Caco-2 (cell line): ENCODE measurements at regions of chr16 and their contacts with region 1.

Region 1: GRCh38 chr16:75110637-75111513 is 5.7 kb downstream of the LDHD start:
- DNase-seq: peak; percentile 88 to 89
- H3K4me3 ChIP-seq: no peak overlapping the region
- H3K4me3 Mint-ChIP-seq: peak overlapping the region; percentile 32
- H3K27ac Mint-ChIP-seq: peak overlapping the region; percentile 84
- H3K4me1 ChIP-seq: peaks cover 18% of the 10 kb centered on the region
- H3K4me1 Mint-ChIP-seq: peaks cover 37% of the 10 kb centered on the region
- H3K27me3 ChIP-seq: no peaks in the 10 kb centered on the region
- H3K27me3 Mint-ChIP-seq: no peaks in the 10 kb centered on the region
- CTCF ChIP-seq: peak; percentile 85 to 93

Region 2: GRCh38 chr16:74862741-74863244 is 248.1 kb before region 1 on chr16:
- CTCF ChIA-PET with region 1: interaction called, 16 read pairs
- POLR2A ChIA-PET with region 1: no interaction called
- intact Hi-C with region 1: no loop called
- DNase-seq: peak; percentile 49 to 78
- H3K4me3 ChIP-seq: no peak overlapping the region
- H3K4me3 Mint-ChIP-seq: no peak overlapping the region
- H3K27ac Mint-ChIP-seq: no peak overlapping the region
- H3K4me1 ChIP-seq: no peaks in the 10 kb centered on the region
- H3K4me1 Mint-ChIP-seq: peaks cover 5% of the 10 kb centered on the region
- H3K27me3 ChIP-seq: no peaks in the 10 kb centered on the region
- H3K27me3 Mint-ChIP-seq: no peaks in the 10 kb centered on the region
- CTCF ChIP-seq: peak; percentile 88 to 97

Region 3: GRCh38 chr16:74975591-74975990 is 135.3 kb before region 1 on chr16:
- CTCF ChIA-PET with region 1: no interaction called
- POLR2A ChIA-PET with region 1: no interaction called
- intact Hi-C with region 1: no loop called
- DNase-seq: no peak
- H3K4me3 ChIP-seq: no peak overlapping the region
- H3K4me3 Mint-ChIP-seq: no peak overlapping the region
- H3K27ac Mint-ChIP-seq: no peak overlapping the region
- H3K4me1 ChIP-seq: no peaks in the 10 kb centered on the region
- H3K4me1 Mint-ChIP-seq: no peaks in the 10 kb centered on the region
- H3K27me3 ChIP-seq: no peaks in the 10 kb centered on the region
- H3K27me3 Mint-ChIP-seq: no peaks in the 10 kb centered on the region
- CTCF ChIP-seq: no peak

Region 4: GRCh38 chr16:74991593-74992403 is 119.1 kb before region 1 on chr16:
- CTCF ChIA-PET with region 1: interaction called, 112 read pairs
- POLR2A ChIA-PET with region 1: interaction called, 3 read pairs
- intact Hi-C with region 1: no loop called
- DNase-seq: peak; percentile 85 to 88
- H3K4me3 ChIP-seq: 0 out of 2 replicates have a peak overlapping the region, but pooled peaks have one; percentile 10
- H3K4me3 Mint-ChIP-seq: peak overlapping the region; percentile 64
- H3K27ac Mint-ChIP-seq: peak overlapping the region; percentile 50
- H3K4me1 ChIP-seq: peaks cover 67% of the 10 kb centered on the region
- H3K4me1 Mint-ChIP-seq: peaks cover 40% of the 10 kb centered on the region
- H3K27me3 ChIP-seq: no peaks in the 10 kb centered on the region
- H3K27me3 Mint-ChIP-seq: no peaks in the 10 kb centered on the region
- CTCF ChIP-seq: no peak

Region 5: GRCh38 chr16:75070012-75070941 is 40.6 kb before region 1 on chr16:
- CTCF ChIA-PET with region 1: interaction called, 11 read pairs
- POLR2A ChIA-PET with region 1: no interaction called
- intact Hi-C with region 1: loop called (anchors 2 kb)
- DNase-seq: peak; percentile 86 to 93
- H3K4me3 ChIP-seq: no peak overlapping the region
- H3K4me3 Mint-ChIP-seq: peak overlapping the region; percentile 63
- H3K27ac Mint-ChIP-seq: peak overlapping the region; percentile 91
- H3K4me1 ChIP-seq: peaks cover 66% of the 10 kb centered on the region
- H3K4me1 Mint-ChIP-seq: peaks cover 55% of the 10 kb centered on the region
- H3K27me3 ChIP-seq: no peaks in the 10 kb centered on the region
- H3K27me3 Mint-ChIP-seq: no peaks in the 10 kb centered on the region
- CTCF ChIP-seq: no peak

Region 6: GRCh38 chr16:75130150-75130771 is 19.4 kb after region 1 on chr16:
- CTCF ChIA-PET with region 1: interaction called, 17 read pairs
- POLR2A ChIA-PET with region 1: no interaction called
- intact Hi-C with region 1: no loop called
- DNase-seq: peak; percentile 56 to 61
- H3K4me3 ChIP-seq: no peak overlapping the region
- H3K4me3 Mint-ChIP-seq: peak overlapping the region; percentile 4
- H3K27ac Mint-ChIP-seq: peak overlapping the region; percentile 61
- H3K4me1 ChIP-seq: peaks cover 45% of the 10 kb centered on the region
- H3K4me1 Mint-ChIP-seq: peaks cover 26% of the 10 kb centered on the region
- H3K27me3 ChIP-seq: no peaks in the 10 kb centered on the region
- H3K27me3 Mint-ChIP-seq: no peaks in the 10 kb centered on the region
- CTCF ChIP-seq: peak in 1 of 2 experiments; percentile 20